ENCODE measurements at regions of chr14 and their contacts with region 1.

Region 1: GRCh38 chr14:96567289-96567899 is 65.2 kb downstream of the PAPOLA start:
- DNase-seq: no peak

Region 2: DNA sequence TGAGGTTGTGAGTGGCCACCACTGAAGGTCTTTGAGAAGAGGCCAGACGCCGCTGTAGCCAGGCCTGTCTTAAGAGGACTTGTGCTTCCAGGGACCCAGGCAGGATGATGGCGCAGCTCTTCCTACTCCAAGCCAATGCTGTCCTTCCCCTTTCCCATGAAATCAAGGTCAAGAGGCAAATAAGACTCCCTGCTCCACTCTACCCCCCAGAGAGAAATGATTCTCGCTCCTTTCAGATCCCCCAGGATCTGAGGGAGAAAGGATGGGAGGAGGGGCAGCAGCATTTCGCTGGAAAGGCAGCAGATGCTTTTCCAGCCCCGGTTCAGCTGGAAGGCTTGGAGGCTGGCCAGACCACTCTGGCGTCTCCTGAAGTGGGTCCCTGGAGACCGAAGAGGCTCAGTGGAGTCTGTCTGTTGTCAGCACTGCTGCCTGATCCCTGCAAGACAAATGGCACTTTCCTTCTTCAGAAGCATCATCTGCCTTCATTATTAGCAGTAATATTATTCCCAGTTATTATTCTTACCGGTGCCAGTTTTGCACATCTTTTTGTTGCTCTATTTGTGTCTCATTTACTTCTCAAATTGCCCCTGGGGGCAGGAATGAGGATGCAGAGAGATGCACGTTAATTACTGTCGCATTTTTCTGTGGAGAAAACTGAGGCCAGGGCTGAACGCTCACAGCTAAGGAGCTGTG is 476.8 kb before region 1 on chr14:
- intact Hi-C with region 1: no loop called
- DNase-seq: peak; percentile 52 to 93 (median 66)

Region 3: DNA sequence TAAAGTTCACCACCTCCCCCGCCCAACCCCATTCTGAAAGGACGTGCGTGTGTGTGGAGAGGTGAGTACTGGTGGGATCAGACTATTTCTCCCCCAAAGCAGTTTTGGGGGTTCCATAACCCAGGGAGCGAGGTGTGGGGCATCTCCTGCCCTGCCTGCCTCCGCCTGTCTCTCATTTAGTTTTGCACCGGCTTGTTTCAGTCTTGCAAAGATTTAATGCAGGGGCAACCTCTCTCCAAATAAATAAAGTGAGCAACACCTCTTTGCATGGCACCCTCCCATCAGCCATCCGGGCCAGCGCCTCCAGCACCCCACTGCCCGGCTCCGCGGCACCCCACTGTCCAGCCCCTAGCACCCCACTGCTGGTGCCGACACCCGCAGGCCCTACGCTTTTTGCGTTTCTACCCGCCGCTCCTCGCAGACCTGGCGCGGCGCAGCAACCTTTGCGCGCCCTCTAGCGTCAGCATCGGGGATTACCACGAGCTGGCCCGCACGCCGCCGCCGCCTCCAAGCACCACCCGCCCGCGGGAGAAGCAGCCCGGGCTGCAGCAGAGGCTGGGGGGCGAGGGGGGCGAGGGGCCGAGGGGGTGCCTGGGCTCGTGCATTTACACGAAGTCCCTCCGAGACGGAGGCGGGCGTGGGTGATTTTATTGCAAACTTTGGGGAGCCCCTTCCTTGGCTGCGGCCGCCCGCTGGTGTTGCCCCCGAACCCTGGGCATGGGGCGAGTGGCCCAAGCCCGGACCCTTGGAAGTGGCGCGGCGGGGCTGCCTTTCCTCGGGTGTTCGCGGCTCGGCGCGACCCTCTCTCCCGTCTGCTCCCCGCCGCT is 174.0 kb after region 1 on chr14:
- intact Hi-C with region 1: loop called (anchors 2 kb)
- DNase-seq: peak; percentile 31 to 95 (median 68)

Region 4: GRCh38 chr14:96852823-96853422 is 285.5 kb after region 1 on chr14:
- intact Hi-C with region 1: loop called (anchors 10 kb)
- DNase-seq: no peak